Sigmoid colon (tissue), 7 donors: ENCODE measurements at regions of chr12 and their contacts with region 1.

Region 1: GRCh38 chr12:132327351-132328171 is 1.8 kb downstream of the GALNT9 start:
- DNase-seq: peak; percentile 95
- H3K4me3 ChIP-seq: peak overlapping the region in 3 of 4 donors; percentile 7 to 30 (median 16)
- H3K27ac ChIP-seq: peak overlapping the region in 3 of 4 donors; percentile 75 to 87 (median 78)
- H3K4me1 ChIP-seq: peaks cover 0 to 59% (median 51%) of the 10 kb centered on the region in 4 donors
- H3K27me3 ChIP-seq: peaks cover 25 to 48% (median 30%) of the 10 kb centered on the region in 3 donors
- CTCF ChIP-seq: no peak
- EP300 ChIP-seq: peak; percentile 58 to 97 (median 86)
- POLR2A ChIP-seq: no peak

Region 2: GRCh38 chr12:132285991-132286681 is 41.4 kb before region 1 on chr12:
- intact Hi-C with region 1: loop called (anchors 5 kb)
- DNase-seq: peak; percentile 88
- H3K4me3 ChIP-seq: peak overlapping the region in 3 of 4 donors; percentile 22 to 31 (median 30)
- H3K27ac ChIP-seq: peak overlapping the region in 1 of 4 donors; percentile 22
- H3K4me1 ChIP-seq: peaks cover 0 to 14% (median 11%) of the 10 kb centered on the region in 4 donors
- H3K27me3 ChIP-seq: peaks cover 0 to 27% (median 23%) of the 10 kb centered on the region in 3 donors
- CTCF ChIP-seq: no peak
- EP300 ChIP-seq: no peak
- POLR2A ChIP-seq: no peak

Region 3: GRCh38 chr12:132342251-132343227 is 15.0 kb after region 1 on chr12:
- intact Hi-C with region 1: loop called (anchors 1 kb)
- DNase-seq: no peak
- H3K4me3 ChIP-seq: no peak overlapping the region
- H3K27ac ChIP-seq: no peak overlapping the region
- H3K4me1 ChIP-seq: peaks cover 0 to 24% (median 18%) of the 10 kb centered on the region in 4 donors
- H3K27me3 ChIP-seq: peaks cover 0 to 4% (median 0%) of the 10 kb centered on the region in 3 donors
- CTCF ChIP-seq: peak in 2 of 4 experiments; percentile 18 to 23
- EP300 ChIP-seq: no peak
- POLR2A ChIP-seq: no peak

Region 4: GRCh38 chr12:132356691-132357622 is 29.4 kb after region 1 on chr12:
- intact Hi-C with region 1: no loop called
- DNase-seq: peak; percentile 87
- H3K4me3 ChIP-seq: no peak overlapping the region
- H3K27ac ChIP-seq: peak overlapping the region in 1 of 4 donors; percentile 47
- H3K4me1 ChIP-seq: peaks cover 0 to 13% (median 4%) of the 10 kb centered on the region in 4 donors
- H3K27me3 ChIP-seq: peaks cover 0 to 43% (median 14%) of the 10 kb centered on the region in 3 donors
- CTCF ChIP-seq: no peak
- EP300 ChIP-seq: no peak
- POLR2A ChIP-seq: no peak